ENCODE measurements at regions of chr5 and their contacts with region 1.

Region 1: DNA sequence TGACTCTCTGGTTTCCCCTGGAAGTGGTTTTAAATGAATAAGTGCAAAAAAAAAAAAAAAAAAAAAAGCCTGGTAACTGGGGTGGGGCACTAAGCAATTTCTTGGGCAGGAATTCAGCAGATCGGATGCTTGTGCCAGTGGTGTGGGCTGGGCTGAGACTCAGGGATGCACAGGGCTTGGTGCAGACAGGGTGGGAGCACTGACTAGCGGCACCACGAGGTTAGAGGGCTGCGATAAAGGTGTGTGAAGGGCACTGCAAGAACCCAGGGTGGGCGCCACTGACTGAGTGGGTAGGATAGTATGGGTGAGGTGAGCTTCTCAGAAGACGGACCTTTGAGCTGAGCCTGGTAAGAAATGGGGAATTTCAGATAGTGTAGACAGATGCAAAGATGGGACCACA is 45.5 kb upstream of the CPLX2 start:
- H3K4me3 ChIP-seq: no peak overlapping the region
- H3K27ac ChIP-seq: no peak overlapping the region
- H3K4me1 ChIP-seq: no peaks in the 10 kb centered on the region
- CTCF ChIP-seq: no peak

Region 2: DNA sequence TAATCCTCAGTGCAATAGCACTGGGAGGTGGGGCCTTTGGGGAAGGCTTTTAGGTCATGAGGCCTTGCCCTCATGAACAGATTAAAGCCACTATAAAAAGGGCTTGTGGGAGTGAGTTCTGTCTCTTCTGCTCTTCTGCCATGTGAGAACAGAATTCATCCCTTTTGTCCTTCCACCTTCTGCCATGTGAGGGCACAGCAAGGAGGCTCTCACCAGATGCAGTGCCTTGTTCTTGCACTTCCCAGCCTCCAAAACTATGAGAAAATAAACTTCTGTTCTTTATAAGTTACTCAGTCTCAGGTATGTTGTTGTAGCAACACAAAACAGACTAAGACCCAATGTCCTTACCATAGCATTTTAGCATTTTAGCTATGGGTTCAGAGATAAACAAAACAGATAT is 36.2 kb before region 1 on chr5:
- CTCF ChIA-PET with region 1: no interaction called
- POLR2A ChIA-PET with region 1: no interaction called
- H3K4me3 ChIP-seq: no peak overlapping the region
- H3K27ac ChIP-seq: no peak overlapping the region
- H3K4me1 ChIP-seq: no peaks in the 10 kb centered on the region
- CTCF ChIP-seq: no peak

Region 3: DNA sequence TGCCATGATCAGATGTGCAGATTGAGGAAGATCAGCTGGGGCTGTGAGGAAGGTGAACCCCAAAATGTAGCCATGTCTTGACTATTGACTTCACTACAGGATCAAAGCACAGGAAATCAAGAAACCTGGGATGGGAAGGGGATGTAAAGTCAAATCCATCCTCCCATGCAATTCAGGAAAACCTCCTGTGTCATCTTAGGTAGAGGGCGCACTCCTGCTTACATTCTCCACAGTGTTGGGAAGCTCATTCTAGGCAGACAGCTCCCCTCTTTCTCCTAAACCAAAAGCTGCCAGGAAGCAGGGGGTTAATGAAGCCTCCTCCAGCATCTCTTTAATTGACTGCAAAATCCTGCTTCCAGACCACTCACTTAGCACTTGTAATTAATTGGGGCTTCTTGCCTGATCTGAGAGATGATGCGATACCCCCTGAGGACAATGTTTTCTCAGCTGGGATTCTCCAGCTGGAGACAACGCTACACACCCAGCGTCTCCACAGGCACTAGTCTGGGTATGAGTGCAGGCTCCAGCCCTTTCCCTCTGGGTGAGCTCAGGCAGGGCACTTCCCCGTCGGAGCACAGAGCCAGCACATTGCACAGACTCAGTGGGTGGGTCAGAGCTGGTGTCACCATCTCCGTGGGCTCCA is 61.4 kb after region 1 on chr5:
- CTCF ChIA-PET with region 1: interaction called, 10 read pairs
- POLR2A ChIA-PET with region 1: no interaction called
- H3K4me3 ChIP-seq: no peak overlapping the region
- H3K27ac ChIP-seq: no peak overlapping the region
- H3K4me1 ChIP-seq: 0 out of 2 replicates have a peak, but pooled peaks cover 2% of the 10 kb centered on the region
- CTCF ChIP-seq: no peak